Activated CD8-positive, alpha-beta T cell treated with anti-CD3 and anti-CD28 coated beads, Interleukin-2, amount 10 ng/mL, durations not matched to agents 7 days and 5 days (primary cell): ENCODE measurements at regions of chr16 and their contacts with region 1.

Region 1: DNA sequence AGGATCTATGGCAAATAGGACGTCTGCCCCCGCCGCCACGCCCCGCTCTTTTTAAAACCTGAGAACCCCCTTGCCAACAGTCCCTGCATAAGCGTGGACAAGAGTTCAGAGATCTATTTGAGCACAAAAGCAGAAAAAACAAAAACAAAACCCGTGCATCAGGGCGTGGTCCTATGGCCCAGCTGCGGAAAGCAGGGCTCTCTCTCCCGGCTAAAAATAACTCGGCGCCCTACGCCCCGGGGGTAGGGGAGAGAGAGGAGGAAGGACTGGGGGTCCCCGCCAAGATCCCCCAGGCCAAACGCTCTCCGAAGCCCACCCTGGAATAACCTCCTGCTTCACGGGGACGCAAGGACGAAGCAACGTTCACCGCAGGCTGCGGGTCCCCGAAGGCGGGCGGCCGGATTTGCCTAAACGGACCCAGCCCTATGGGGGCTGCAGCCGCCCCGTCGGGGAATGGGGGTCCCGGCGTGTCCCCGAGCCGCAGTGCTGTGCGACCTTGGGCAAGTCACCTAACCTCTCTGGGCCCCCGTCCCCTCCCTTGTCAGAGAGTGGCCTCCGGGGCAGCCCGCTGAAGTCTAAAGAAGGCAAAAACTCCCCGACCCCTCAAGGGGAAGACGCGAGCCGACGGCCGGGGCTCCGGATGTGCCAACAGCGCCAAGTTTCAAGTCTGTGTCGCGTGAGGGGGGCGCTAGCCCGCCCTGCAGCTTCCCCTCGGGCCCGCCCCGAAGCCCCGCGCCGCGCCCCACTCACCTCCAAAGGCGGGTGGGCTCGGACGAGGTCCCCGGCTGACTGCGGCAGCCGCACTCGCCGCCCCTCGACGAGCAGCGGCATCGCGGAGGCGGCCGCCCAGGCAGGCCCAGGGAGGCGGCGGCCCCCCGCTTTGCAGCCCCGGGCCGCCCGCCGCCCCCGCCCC is 477 bp downstream of the NTAN1 start:
- DNase-seq: peak; percentile 79
- ATAC-seq: peak; percentile 81
- H3K4me3 Mint-ChIP-seq: peak overlapping the region; percentile 92
- H3K27ac Mint-ChIP-seq: peak overlapping the region; percentile 86
- H3K4me1 Mint-ChIP-seq: peaks cover 21% of the 10 kb centered on the region
- H3K27me3 Mint-ChIP-seq: no peaks in the 10 kb centered on the region

Region 2: DNA sequence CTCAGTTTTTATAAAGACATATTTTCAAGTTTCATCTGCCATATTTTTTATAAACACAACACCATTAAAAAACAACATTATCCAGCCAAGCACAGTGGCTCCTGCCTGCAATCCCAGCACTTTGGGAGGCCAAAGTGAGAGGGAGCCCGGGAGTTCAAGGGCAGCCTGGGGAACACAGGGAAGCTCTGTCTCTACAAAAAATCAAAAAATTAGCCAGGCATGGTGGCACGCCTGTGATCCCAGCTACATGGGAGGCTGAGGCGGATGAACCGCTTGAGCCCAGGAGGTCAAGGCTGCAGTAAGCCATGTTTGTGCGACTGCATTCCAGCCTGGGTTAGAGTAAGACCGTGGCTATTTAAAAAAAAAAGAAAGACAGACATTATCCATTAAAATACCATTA is 17.7 kb after region 1 on chr16:
- CTCF ChIA-PET with region 1: interaction called, 19 read pairs
- POLR2A ChIA-PET with region 1: no interaction called
- DNase-seq: no peak
- ATAC-seq: no peak
- H3K4me3 Mint-ChIP-seq: no peak overlapping the region
- H3K27ac Mint-ChIP-seq: no peak overlapping the region
- H3K4me1 Mint-ChIP-seq: no peaks in the 10 kb centered on the region
- H3K27me3 Mint-ChIP-seq: no peaks in the 10 kb centered on the region